ENCODE measurements at regions of chr3 and their contacts with region 1.

Region 1: GRCh38 chr3:98556164-98557130 is 24.7 kb downstream of the GPR15 start:
- DNase-seq: peak in 2 of 9 donors; percentile 19 to 58
- ATAC-seq: peak; percentile 77
- H3K4me3 ChIP-seq: no peak overlapping the region
- H3K4me3 Mint-ChIP-seq: peak overlapping the region in 3 of 10 donors; percentile 9 to 83 (median 30)
- H3K27ac ChIP-seq: no peak overlapping the region
- H3K27ac Mint-ChIP-seq: peak overlapping the region in 5 of 9 donors; percentile 5 to 98 (median 40)
- H3K4me1 ChIP-seq: peaks cover 0 to 56% of the 10 kb centered on the region in 2 donors
- H3K4me1 Mint-ChIP-seq: peaks cover 6 to 84% (median 23%) of the 10 kb centered on the region in 7 donors
- H3K27me3 ChIP-seq: no peaks in the 10 kb centered on the region
- H3K27me3 Mint-ChIP-seq: peaks cover 0 to 5% (median 0%) of the 10 kb centered on the region in 5 donors

Region 2: DNA sequence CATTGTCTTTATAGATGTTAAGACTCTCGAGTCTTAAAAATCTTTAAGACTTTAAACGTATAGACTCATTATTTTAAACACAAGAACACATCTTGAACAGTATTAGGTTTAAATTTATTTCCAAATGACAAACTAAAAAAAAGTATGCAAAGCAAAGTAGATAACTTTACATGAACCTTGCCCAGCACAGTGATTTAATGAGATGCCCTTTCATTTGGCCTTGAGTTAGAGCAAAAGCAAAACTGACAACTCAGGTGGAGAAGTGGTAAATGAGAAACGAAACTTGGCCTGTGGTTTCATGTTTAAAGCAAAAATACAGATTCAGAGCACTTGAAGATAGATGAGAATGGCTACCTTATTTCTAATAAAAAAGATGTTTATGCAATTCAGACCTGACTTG is 16.1 kb before region 1 on chr3:
- CTCF ChIA-PET with region 1: no interaction called
- POLR2A ChIA-PET with region 1: interaction called, 3 read pairs
- intact Hi-C with region 1: loop called (anchors 1 kb)
- DNase-seq: no peak
- ATAC-seq: no peak
- H3K4me3 ChIP-seq: no peak overlapping the region
- H3K4me3 Mint-ChIP-seq: peak overlapping the region in 1 of 10 donors; percentile 49
- H3K27ac ChIP-seq: no peak overlapping the region
- H3K27ac Mint-ChIP-seq: peak overlapping the region in 1 of 9 donors; percentile 75
- H3K4me1 ChIP-seq: peaks cover 0 to 12% of the 10 kb centered on the region in 2 donors
- H3K4me1 Mint-ChIP-seq: peaks cover 0 to 64% (median 0%) of the 10 kb centered on the region in 7 donors
- H3K27me3 ChIP-seq: no peaks in the 10 kb centered on the region
- H3K27me3 Mint-ChIP-seq: no peaks in the 10 kb centered on the region

Region 3: DNA sequence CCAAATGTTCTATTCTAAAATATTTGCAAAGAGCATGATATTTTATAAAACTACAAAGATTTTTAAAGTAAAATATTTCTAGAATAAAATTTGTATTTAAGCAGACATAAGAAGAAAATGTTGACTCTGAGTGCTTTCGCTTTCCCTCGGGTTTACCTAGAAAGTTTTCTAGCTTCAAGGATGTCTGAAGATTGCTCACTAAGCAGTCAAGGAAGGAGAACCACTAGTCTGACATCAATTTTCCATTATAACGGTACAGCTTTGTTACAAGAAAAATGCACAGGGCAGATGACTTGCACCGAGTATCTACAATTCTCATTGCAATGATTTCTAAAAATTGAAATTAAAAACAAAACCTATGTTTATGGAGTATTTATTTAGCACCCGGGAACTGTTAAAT is 10.5 kb before region 1 on chr3:
- CTCF ChIA-PET with region 1: no interaction called
- POLR2A ChIA-PET with region 1: no interaction called
- intact Hi-C with region 1: loop called in 1 of 2 experiments (anchors 1 kb)
- DNase-seq: no peak
- ATAC-seq: no peak
- H3K4me3 ChIP-seq: no peak overlapping the region
- H3K4me3 Mint-ChIP-seq: peak overlapping the region in 1 of 10 donors; percentile 88
- H3K27ac ChIP-seq: no peak overlapping the region
- H3K27ac Mint-ChIP-seq: peak overlapping the region in 1 of 9 donors; percentile 94
- H3K4me1 ChIP-seq: peaks cover 0 to 18% of the 10 kb centered on the region in 2 donors
- H3K4me1 Mint-ChIP-seq: peaks cover 0 to 68% (median 0%) of the 10 kb centered on the region in 7 donors
- H3K27me3 ChIP-seq: no peaks in the 10 kb centered on the region
- H3K27me3 Mint-ChIP-seq: peaks cover 0 to 9% (median 0%) of the 10 kb centered on the region in 5 donors